Psoas muscle (tissue), 8 donors: ENCODE measurements at regions of chr20 and their contacts with region 1.

Region 1: DNA sequence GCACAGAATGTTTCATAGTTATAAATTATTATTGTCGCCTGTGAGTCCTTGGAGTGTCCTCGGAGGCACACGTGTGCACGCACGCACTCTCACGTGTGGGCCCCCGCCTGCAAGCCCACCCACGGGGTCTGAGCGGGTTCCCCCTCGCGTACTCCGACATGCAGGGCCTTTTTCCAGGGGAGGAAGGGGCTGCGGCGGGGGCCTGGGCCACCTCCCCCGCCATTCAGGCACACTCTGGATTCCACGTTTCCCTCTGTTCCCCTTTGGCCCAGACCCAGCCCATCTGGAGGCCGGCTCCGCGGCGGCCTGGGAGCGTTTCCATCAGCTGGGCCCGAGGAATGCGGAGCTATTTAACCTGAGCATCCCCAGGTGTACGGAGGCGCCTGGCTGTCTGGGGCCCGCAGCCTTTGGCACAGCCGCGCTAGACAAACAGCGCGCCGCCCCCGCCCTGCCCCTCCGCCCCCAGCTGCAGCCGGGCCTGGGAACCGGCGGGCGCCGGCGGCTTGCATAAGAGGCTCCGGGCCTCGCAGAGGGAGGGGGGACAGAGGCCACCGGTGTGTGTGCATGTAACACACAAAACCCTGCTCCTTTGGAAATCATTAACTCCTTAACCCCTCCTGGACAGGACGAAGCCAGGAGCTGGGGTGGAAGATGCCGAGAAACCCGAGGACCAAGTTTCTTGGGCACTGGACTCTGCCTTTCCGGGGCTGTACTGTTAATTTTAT is 3.3 kb downstream of the ID1 start:
- DNase-seq: peak; percentile 82 to 84
- ATAC-seq: peak in 1 of 4 donors; percentile 11
- H3K4me3 ChIP-seq: peak overlapping the region; percentile 80
- H3K27ac ChIP-seq: peak overlapping the region; percentile 85
- H3K4me1 ChIP-seq: peaks cover 30% of the 10 kb centered on the region
- H3K27me3 ChIP-seq: peaks cover 0 to 3% (median 2%) of the 10 kb centered on the region in 3 donors
- CTCF ChIP-seq: no peak

Region 2: GRCh38 chr20:31560094-31560899 is 48.1 kb before region 1 on chr20:
- intact Hi-C with region 1: loop called (anchors 1 to 2 kb)
- DNase-seq: peak; percentile 81 to 85
- ATAC-seq: peak; percentile 39 to 68 (median 60)
- H3K4me3 ChIP-seq: no peak overlapping the region
- H3K27ac ChIP-seq: peak overlapping the region; percentile 83
- H3K4me1 ChIP-seq: peaks cover 32% of the 10 kb centered on the region
- H3K27me3 ChIP-seq: no peaks in the 10 kb centered on the region
- CTCF ChIP-seq: peak; percentile 80

Region 3: GRCh38 chr20:31565699-31566331 is 42.6 kb before region 1 on chr20:
- intact Hi-C with region 1: loop called (anchors 1 to 2 kb)
- DNase-seq: no peak
- ATAC-seq: no peak
- H3K4me3 ChIP-seq: no peak overlapping the region
- H3K27ac ChIP-seq: no peak overlapping the region
- H3K4me1 ChIP-seq: peaks cover 25% of the 10 kb centered on the region
- H3K27me3 ChIP-seq: no peaks in the 10 kb centered on the region
- CTCF ChIP-seq: no peak

Region 4: GRCh38 chr20:31803552-31804291 is 195.3 kb after region 1 on chr20:
- intact Hi-C with region 1: no loop called
- DNase-seq: no peak
- ATAC-seq: no peak
- H3K4me3 ChIP-seq: no peak overlapping the region
- H3K27ac ChIP-seq: no peak overlapping the region
- H3K4me1 ChIP-seq: peaks cover 41% of the 10 kb centered on the region
- H3K27me3 ChIP-seq: no peaks in the 10 kb centered on the region
- CTCF ChIP-seq: no peak